K562 (cell line): ENCODE measurements at regions of chr19 and their contacts with region 1.

Region 1: DNA sequence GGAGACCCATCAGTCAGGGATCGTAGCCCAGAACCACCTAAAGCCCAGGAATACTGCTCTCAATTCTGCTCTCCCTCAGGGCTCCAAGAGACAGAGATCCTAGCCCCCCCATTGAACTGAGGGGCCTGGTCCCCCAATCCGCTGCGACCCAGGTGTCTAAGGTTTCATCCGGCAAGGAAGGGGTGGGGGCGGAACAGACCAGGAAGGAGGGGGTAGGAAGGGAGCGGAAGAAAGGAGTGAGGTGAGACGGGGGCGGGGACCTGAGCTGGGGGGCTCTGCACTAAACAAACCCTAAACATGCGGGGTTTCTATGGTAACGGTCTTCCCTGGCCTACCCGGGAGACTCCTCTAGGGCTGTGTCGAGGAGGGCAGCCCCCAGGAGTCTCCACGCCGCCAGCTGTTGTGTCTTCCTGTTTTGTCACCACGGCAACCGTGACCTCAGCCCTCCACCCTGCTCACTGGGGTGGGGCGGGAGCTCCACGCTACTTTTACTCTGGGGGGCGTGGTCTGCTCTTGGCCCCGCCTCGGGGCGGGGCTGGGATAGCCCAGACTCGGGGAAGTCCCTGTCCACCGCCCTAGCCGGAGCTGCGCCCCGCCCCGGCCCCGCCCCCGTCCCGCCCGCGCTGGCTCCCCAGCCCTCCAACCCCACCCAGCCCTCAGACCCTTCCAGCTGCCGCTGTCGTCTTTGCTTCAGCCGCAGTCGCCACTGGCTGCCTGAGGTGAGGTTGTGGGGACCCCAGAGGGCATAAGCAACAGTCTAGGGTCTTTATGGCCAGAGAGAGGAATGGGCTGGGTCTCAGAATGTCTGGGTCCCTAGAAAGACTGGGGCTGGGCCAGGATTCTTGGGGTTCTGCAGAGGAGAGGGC is at the start of gene MYADM:
- DNase-seq: peak; percentile 97 to 98 (median 98)
- ATAC-seq: peak; percentile 73
- H3K4me3 ChIP-seq: peak within 1 kb of the TSS; percentile 78
- H3K27ac ChIP-seq: peak within 1 kb of the TSS; percentile 99
- H3K4me1 ChIP-seq: peaks cover 27 to 54% of the 10 kb centered on the region in 2 experiments; a peak in 4 of 5 replicates
- H3K27me3 ChIP-seq: peaks cover 5 to 16% of the 10 kb centered on the region in 2 experiments; a peak in 3 of 5 replicates
- CTCF ChIP-seq: no peak
- EP300 ChIP-seq: no peak
- POLR2A ChIP-seq: 0 out of 2 replicates have a peak, but pooled peaks have one; percentile 52
- RAD21 ChIP-seq: no peak
- polyA plus RNA-seq, gene MYADM: 10.4 to 24.8 TPM

Region 2: DNA sequence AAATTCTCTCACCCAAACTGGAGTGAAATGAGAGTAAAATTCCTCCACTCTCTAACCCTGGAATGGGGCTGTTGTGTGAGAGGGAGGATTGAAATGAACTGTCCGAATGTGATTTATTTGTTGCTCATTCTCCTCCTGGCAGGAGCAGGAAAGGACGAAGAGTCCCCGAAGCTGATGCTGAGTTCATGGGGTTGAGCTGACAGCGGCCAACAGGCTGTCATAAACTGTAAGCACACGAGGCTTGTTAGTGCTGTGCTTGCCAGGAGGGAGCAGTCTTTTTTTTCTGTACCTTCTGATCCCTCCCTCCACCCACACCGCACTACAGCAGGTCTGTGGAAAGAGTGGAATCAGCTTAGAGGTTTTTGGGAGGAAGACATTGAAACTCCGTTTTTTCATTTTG is 362.6 kb before region 1 on chr19:
- CTCF ChIA-PET with region 1: no interaction called
- POLR2A ChIA-PET with region 1: no interaction called
- in situ Hi-C with region 1: no loop called
- intact Hi-C with region 1: no loop called
- DNase-seq: no peak
- ATAC-seq: no peak
- H3K4me3 ChIP-seq: no peak overlapping the region
- H3K27ac ChIP-seq: no peak overlapping the region
- H3K4me1 ChIP-seq: no peaks in the 10 kb centered on the region
- H3K27me3 ChIP-seq: peaks cover 4 to 19% of the 10 kb centered on the region in 2 experiments; a peak in 3 of 5 replicates
- CTCF ChIP-seq: no peak
- EP300 ChIP-seq: no peak
- POLR2A ChIP-seq: no peak
- RAD21 ChIP-seq: no peak

Region 3: DNA sequence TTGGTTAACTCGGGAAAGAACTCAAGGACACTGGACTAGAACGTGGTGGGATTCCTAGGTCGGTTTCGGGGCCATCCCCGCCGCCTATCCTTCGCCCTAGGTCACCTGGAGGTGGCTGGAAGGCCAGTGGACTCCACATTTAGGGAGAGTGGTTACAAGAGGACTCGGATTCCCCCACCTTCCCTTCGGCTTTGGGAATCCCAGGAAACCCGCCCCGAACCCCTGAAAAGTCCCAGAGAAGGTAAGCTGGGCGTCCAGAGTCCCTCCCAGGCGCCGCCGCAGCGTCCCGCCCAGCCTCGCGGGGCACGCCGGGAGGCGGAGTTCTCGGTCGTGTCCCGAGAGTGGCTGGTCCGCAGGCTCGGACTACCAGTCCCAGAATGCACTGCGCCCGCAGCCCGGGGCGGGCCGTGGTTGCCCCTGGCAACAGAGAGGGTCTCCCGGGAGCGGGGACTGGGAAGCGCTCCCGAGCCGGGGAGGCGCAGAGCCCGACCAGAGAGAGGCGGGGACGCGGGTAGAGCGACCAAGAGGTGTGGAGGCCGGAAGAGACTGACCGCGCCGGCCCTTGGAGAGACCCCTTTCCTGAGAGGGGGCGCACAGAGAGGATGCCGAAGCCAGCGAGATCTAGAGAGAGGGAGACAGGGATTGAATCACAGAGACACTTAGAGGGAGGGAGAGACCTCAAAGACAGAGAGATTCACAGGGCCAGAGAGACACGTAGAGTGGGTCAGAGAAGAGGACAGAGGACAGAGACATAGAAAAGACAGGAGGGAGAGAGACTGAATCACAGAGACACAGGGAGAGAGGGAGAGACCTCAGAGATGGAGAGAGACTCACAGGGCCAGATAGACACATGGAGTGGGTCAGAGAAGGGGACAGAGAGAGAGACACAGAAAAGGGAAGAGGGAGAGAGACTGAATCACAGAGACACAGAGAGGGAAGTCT is 12.0 kb after region 1 on chr19:
- CTCF ChIA-PET with region 1: no interaction called
- POLR2A ChIA-PET with region 1: interaction called, 27 read pairs
- in situ Hi-C with region 1: no loop called
- intact Hi-C with region 1: no loop called
- DNase-seq: peak; percentile 89 to 93 (median 90)
- ATAC-seq: peak; percentile 98
- H3K4me3 ChIP-seq: peak overlapping the region; percentile 38
- H3K27ac ChIP-seq: no peak overlapping the region
- H3K4me1 ChIP-seq: peaks cover 0 to 41% of the 10 kb centered on the region in 2 experiments; a peak in 3 of 5 replicates
- H3K27me3 ChIP-seq: peaks cover 9 to 12% of the 10 kb centered on the region in 2 experiments; a peak in 3 of 5 replicates
- CTCF ChIP-seq: no peak
- EP300 ChIP-seq: no peak
- POLR2A ChIP-seq: no peak
- RAD21 ChIP-seq: no peak